Activated T-helper 1 cell treated with anti-CD3 and anti-CD28 coated beads, Interleukin-12 subunit alpha, Interleukin-12 subunit beta, Interleukin-2, Interleukin-4 antibody, amounts not matched to agents 30 ng/mL and 10 ng/mL and 1 ng/mL, durations not matched to agents 14 hours and 24 hours and 36 hours (primary cell): ENCODE measurements at regions of chr1 and their contacts with region 1.

Region 1: GRCh38 chr1:70410604-70411359 is at the start of gene CTH:
- DNase-seq: peak; percentile 91
- H3K4me3 Mint-ChIP-seq: peak within 1 kb of the TSS; percentile 94
- H3K27ac Mint-ChIP-seq: peak within 1 kb of the TSS; percentile 89
- H3K4me1 Mint-ChIP-seq: peaks cover 33% of the 10 kb centered on the region
- H3K27me3 Mint-ChIP-seq: peaks cover 8% of the 10 kb centered on the region
- total RNA-seq, gene CTH: 13.3 and 13.7 TPM in 2 replicates

Region 2: DNA sequence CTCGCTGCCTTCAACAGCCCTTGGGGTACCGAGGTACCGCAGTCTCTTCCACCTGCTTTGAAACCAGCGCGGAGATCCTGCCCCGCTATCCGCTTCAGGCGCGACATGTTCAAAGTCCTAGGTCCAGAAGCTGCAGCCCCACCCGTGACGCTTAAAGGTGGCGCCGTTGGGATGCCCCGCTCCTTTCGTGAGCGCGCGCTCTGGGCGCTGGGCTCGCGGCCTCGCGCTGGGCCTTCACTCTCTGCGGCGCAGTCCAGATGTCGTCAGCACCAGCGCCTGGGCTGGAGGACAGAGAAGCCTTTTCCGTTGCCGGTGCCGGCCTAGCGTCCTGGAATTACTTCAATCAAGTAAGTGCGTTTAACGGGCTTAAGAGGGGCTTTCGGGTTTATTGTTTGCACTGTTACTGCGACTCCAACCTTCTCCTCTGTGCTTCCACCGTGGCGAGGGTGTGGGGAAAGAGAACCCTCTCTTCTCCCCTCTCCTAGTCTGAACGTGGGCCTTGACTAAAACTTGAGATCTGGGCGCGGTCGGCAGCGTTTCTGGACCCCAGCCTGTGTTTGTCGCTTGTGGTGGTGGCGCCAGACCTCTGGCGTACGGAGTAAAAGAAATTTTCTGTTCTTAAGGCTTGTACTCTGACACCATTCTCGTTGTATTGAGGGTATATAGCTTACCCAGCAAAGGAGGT is 205.2 kb before region 1 on chr1 and contains the start of gene LRRC40:
- intact Hi-C with region 1: loop called (anchors 1 kb)
- DNase-seq: peak; percentile 96
- H3K4me3 Mint-ChIP-seq: peak within 1 kb of the TSS; percentile 100
- H3K27ac Mint-ChIP-seq: peak within 1 kb of the TSS; percentile 96
- H3K4me1 Mint-ChIP-seq: peaks cover 64% of the 10 kb centered on the region
- H3K27me3 Mint-ChIP-seq: no peaks in the 10 kb centered on the region
- total RNA-seq, gene LRRC40: 22.6 and 23.4 TPM in 2 replicates

Region 3: GRCh38 chr1:70354332-70355110 is 56.3 kb before region 1 on chr1 and contains the start of gene ANKRD13C:
- intact Hi-C with region 1: loop called (anchors 1 kb)
- DNase-seq: peak; percentile 88
- H3K4me3 Mint-ChIP-seq: peak within 1 kb of the TSS; percentile 89
- H3K27ac Mint-ChIP-seq: peak within 1 kb of the TSS; percentile 95
- H3K4me1 Mint-ChIP-seq: peaks cover 27% of the 10 kb centered on the region
- H3K27me3 Mint-ChIP-seq: no peaks in the 10 kb centered on the region
- total RNA-seq, gene ANKRD13C: 25.5 and 26.5 TPM in 2 replicates

Region 4: DNA sequence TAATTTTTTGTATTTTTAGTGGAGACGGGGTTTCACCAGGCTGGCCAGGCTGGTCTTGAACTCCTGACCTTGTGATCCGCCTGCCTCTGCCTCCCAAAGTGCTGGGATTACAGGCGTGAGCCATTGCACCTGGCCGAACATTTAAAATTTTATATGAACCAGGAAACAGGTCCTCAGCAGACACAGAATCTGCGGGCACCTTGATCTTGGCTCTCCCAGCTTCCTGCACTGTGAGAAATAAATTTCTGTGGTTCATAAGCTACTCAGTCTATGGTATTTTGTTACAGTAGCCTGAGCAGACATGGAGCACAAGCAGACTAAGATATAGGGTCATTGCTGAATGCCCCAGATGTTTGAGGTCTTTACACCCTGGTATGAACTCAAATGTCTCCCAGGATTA is 23.3 kb before region 1 on chr1:
- intact Hi-C with region 1: no loop called
- DNase-seq: no peak
- H3K4me3 Mint-ChIP-seq: no peak overlapping the region
- H3K27ac Mint-ChIP-seq: no peak overlapping the region
- H3K4me1 Mint-ChIP-seq: no peaks in the 10 kb centered on the region
- H3K27me3 Mint-ChIP-seq: peaks cover 19% of the 10 kb centered on the region

Region 5: DNA sequence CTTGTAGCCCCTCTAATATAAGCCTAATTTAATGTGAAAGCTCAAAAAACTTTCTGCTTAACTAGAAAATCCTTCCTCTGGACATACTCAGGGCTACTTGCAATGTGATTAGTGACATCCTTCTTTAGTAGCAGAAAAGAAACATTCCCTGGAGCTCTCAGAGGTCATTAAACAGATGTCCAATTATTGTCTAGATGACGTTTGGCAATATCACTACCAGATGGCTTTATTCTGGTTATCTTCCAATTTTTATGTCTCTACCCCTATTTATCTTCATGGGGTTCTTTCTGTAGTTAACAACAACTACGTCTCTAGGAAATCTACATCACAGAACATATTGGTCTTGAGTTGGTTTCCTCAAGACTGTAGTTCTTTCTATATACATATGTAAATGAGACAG is 44.5 kb after region 1 on chr1:
- intact Hi-C with region 1: loop called (anchors 1 kb)
- DNase-seq: no peak
- H3K4me3 Mint-ChIP-seq: no peak overlapping the region
- H3K27ac Mint-ChIP-seq: no peak overlapping the region
- H3K4me1 Mint-ChIP-seq: no peaks in the 10 kb centered on the region
- H3K27me3 Mint-ChIP-seq: peaks cover 2% of the 10 kb centered on the region

Region 6: DNA sequence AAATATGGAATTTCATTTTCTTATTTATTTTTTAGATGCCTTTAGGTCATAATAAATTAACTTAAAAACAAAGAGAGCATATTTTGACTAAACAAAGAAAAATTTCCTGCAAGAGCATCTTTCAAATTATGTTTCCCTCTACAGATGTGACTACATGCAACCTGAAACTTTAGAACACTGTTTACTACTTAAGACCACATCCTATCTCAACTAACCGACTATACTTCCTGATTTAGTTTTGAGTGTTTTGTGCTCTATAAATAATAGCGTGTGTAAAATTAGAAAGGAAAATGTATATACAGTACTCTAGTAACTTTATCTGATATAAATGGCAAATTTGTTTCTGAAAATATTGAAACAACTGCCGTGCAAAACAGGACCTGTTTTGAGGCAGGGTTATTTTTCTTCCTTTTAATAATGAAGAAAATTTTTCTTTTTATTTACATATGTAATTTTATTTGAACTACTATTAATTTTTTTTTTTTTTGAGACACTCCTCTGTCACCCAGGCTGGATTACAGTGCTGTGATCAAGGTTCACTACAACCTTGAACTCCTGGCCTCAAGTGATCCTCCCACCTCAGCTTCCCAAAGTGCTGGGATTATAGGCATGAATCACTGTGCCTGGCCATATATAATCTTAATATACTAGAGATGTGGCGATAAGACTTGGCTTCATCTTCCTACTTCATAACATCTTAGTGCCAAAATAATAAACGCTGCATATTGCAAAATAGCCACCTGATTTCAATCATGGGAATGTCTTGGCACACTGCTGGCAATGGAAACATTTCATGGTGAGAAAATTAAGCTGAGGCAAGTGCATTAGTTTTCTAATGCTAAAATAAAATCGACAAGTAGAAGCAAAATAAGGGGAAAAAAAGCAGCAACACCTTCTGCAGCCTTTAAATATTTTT is 657.8 kb after region 1 on chr1:
- intact Hi-C with region 1: loop called (anchors 5 kb)
- DNase-seq: no peak
- H3K4me3 Mint-ChIP-seq: no peak overlapping the region
- H3K27ac Mint-ChIP-seq: peak overlapping the region; percentile 61
- H3K4me1 Mint-ChIP-seq: peaks cover 41% of the 10 kb centered on the region
- H3K27me3 Mint-ChIP-seq: no peaks in the 10 kb centered on the region